ENCODE measurements at regions of chr10 and their contacts with region 1.

Region 1: DNA sequence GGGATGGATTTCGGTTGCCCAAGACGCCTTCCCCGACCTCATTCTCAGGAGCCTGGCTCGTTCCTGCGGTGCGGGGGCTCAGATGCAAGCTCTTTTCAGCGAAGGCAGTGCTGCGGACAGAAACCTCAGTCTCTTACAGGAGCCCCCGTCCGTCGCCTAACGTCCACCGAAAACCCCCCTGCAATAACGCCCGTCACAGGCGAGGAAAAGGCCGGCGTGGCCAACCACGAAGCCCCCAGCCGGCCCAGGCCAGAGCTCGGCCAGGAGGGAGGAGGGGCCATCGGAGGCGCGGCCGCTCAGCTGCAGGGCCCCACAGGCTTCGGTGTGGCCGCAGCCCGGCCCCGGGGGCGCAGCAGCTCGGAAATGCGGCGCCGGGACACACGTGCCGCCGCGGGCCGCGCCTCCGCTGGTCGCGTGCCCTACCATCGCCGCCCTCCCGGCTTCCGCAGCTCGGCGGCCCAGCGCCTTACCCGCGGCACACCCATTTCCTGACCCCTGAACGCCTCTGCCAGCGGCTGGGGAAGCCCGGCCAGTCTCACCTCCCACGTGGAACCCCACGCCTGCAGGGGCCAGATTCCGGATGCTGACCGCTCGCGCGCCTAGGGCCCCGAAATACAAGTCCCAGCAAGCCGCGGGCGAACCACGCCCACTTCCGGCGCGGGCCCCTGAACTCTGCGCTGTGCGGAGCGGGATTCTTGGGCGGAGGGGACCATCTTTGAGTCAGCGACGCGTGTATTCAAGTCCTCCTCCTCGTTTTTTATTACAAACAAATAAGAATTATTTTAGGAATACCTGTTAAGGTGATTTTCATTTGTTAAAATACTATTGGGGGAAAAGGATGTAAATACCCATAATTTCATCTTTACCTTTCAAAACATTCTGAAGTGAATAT is at the start of gene ZNF239:
- DNase-seq: peak; percentile 71 to 96
- H3K4me3 ChIP-seq: peak within 1 kb of the TSS; percentile 74 to 78
- H3K27ac ChIP-seq: peak within 1 kb of the TSS; percentile 71 to 80
- H3K4me1 ChIP-seq: no peaks in the 10 kb centered on the region
- H3K27me3 ChIP-seq: no peaks in the 10 kb centered on the region
- CTCF ChIP-seq: no peak
- total RNA-seq, gene ZNF239: 7.1 TPM

Region 2: DNA sequence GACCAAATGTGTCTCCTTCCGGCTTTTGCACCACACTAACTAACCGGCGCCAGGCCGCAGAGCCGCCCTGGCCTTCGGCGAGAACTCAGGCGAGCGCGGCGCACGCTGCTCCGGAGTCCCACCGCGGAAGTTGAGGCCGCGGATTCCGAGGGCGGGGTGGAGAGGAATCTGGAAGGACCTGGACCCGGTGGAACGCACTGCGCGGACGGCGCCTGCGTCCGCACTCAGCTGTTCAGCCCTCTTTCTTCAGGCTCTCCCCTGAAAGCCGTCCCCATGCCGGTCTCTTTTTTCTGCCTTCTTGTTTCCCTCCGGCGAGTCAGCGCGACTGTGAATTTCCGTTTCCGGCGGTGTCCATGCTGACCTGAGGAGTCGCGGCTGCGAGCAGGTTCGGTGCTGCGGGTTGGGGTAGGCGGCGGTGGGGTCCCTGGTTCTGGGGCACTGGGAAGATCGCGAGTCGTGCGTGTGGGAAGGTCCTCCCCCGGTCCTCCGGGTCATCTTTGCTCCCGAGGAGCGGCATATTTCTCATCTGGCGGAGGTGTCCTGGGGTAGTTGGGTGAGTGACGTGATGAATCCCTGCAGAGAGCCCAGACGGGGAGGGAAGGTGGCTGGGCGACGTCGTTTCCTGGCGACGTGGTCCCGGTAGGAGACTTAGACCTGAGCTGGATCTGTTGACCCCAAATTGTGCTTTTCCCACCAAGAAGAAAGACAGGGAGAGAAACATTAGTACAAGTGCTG is 791.6 kb before region 1 on chr10 and contains the start of gene BMS1:
- intact Hi-C with region 1: loop called (anchors 10 kb)
- DNase-seq: peak; percentile 46 to 94
- H3K4me3 ChIP-seq: peak within 1 kb of the TSS; percentile 67 to 77
- H3K27ac ChIP-seq: peak within 1 kb of the TSS; percentile 87 to 94
- H3K4me1 ChIP-seq: peaks cover 0 to 14% of the 10 kb centered on the region in 2 donors
- H3K27me3 ChIP-seq: no peaks in the 10 kb centered on the region
- CTCF ChIP-seq: no peak
- total RNA-seq, gene BMS1: 6.2 TPM

Region 3: GRCh38 chr10:43138021-43138756 is 436.1 kb before region 1 on chr10 and contains the start of gene CSGALNACT2:
- intact Hi-C with region 1: loop called (anchors 10 kb)
- DNase-seq: peak; percentile 64 to 95
- H3K4me3 ChIP-seq: peak within 1 kb of the TSS; percentile 85 to 87
- H3K27ac ChIP-seq: peak within 1 kb of the TSS; percentile 92 to 98
- H3K4me1 ChIP-seq: peaks cover 0 to 15% of the 10 kb centered on the region in 2 donors
- H3K27me3 ChIP-seq: no peaks in the 10 kb centered on the region
- CTCF ChIP-seq: no peak
- total RNA-seq, gene CSGALNACT2: 19.7 TPM

Region 4: DNA sequence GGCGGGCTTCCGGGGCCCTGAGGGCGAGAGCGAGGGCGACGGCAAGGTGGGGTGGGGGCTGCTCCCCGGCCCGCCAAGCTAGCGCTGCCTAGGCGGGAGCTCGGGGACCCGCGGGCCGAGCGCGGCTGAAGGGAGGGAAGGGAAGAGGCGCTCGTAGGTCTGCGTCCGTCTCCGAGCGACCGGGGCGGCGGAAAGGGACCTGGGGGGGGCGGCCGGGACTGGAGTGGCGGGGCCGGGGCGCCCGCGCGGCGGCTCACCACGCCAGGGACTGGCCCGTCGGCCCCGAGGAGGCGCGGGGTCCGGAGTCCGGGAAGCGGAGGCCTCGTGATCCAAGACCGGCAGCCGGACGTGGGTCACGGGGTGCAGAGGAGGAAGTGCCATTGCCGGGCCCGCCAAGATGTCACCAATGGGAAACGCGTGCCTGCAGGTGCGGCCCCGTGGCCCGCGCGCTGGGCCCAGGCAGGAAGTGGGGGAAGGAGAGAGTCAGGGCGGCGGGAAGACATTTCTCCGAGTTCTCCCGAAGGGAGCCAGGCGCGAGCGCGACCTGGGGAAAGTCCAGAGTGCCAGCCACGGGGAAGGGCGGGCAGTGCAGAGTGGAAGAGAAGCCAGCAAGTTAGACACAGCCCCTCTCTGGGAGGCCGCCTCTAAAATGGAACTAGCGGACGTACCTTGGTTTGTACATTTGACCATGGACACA is 177.2 kb before region 1 on chr10:
- intact Hi-C with region 1: loop called (anchors 10 kb)
- DNase-seq: peak; percentile 76 to 94
- H3K4me3 ChIP-seq: peak overlapping the region; percentile 75 to 81
- H3K27ac ChIP-seq: peak overlapping the region; percentile 97 to 99
- H3K4me1 ChIP-seq: peaks cover 7 to 40% of the 10 kb centered on the region in 2 donors
- H3K27me3 ChIP-seq: no peaks in the 10 kb centered on the region
- CTCF ChIP-seq: no peak

Region 5: GRCh38 chr10:43524434-43525247 is 49.6 kb before region 1 on chr10:
- intact Hi-C with region 1: no loop called
- DNase-seq: no peak
- H3K4me3 ChIP-seq: no peak overlapping the region
- H3K27ac ChIP-seq: no peak overlapping the region
- H3K4me1 ChIP-seq: no peaks in the 10 kb centered on the region
- H3K27me3 ChIP-seq: no peaks in the 10 kb centered on the region
- CTCF ChIP-seq: no peak

Region 6: DNA sequence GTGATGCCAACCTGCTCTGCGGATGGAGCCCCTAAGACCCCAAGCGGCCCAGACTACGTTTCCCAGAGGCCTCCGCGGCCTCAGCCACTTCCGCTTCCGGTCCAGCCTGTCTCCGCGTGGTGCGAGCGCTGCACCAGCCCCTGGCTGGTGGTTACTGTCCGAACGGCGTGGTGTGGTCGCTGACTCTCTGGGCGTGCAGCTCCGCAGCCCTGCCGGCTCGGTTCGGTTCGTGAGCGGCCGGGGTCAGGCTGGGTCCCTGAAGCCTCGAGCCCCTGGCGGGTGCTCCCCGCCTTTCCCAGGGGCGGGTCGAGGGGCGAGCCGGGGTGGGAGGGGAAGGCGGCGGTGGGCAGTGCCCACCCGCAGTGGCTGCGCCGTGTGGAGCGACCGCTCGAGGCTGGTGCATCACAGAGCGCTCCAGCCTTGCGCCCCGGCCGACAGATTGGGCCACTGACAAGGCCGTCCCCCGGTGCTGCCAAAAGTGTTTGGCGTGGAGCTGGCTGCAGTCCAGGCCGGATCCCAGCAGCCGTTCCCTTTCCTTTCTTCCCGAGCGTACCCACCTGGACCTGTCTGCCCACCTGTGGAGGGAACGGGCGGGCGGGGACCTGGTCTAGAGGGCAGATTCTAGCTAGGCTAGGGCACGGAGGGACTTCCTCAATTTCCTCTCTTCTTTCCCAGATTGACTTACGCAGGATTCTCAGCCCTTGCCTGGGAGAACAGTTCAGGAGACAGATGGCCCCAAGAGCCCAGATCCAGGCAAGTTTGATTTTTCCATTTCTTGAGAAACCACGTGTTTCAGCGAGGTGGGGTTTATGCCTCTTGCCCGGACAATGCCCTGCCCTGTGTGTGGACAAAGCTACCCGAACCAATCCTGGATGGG is 32.3 kb after region 1 on chr10 and contains the start of gene ZNF485:
- intact Hi-C with region 1: loop called (anchors 2 kb)
- DNase-seq: peak in 1 of 2 donors; percentile 79
- H3K4me3 ChIP-seq: peak within 1 kb of the TSS; percentile 72 to 97
- H3K27ac ChIP-seq: peak within 1 kb of the TSS; percentile 41 to 54
- H3K4me1 ChIP-seq: peaks cover 0 to 10% of the 10 kb centered on the region in 2 donors
- H3K27me3 ChIP-seq: no peaks in the 10 kb centered on the region
- CTCF ChIP-seq: peak in 1 of 3 experiments; percentile 2
- total RNA-seq, gene ZNF485: 0.43 TPM

Region 7: GRCh38 chr10:43648398-43649184 is 74.3 kb after region 1 on chr10 and contains the start of gene ZNF32:
- intact Hi-C with region 1: loop called (anchors 1 kb)
- DNase-seq: peak; percentile 32 to 90
- H3K4me3 ChIP-seq: peak within 1 kb of the TSS; percentile 85 to 95
- H3K27ac ChIP-seq: peak within 1 kb of the TSS; percentile 73 to 78
- H3K4me1 ChIP-seq: peaks cover 0 to 5% of the 10 kb centered on the region in 2 donors
- H3K27me3 ChIP-seq: no peaks in the 10 kb centered on the region
- CTCF ChIP-seq: no peak
- total RNA-seq, gene ZNF32: 10.9 TPM